ENCODE measurements at regions of chr3 and their contacts with region 1.

Region 1: GRCh38 chr3:28348629-28349483 is at the starts of genes AZI2 and ZCWPW2:
- H3K4me3 Mint-ChIP-seq: peak within 1 kb of the TSS; percentile 95
- H3K27ac Mint-ChIP-seq: peak within 1 kb of the TSS; percentile 100
- H3K4me1 Mint-ChIP-seq: peaks cover 37% of the 10 kb centered on the region
- H3K27me3 Mint-ChIP-seq: no peaks in the 10 kb centered on the region

Region 2: GRCh38 chr3:28241221-28242160 is 107.4 kb before region 1 on chr3 and contains the start of gene CMC1:
- intact Hi-C with region 1: loop called (anchors 2 kb)
- H3K4me3 Mint-ChIP-seq: peak within 1 kb of the TSS; percentile 85
- H3K27ac Mint-ChIP-seq: peak within 1 kb of the TSS; percentile 92
- H3K4me1 Mint-ChIP-seq: peaks cover 44% of the 10 kb centered on the region
- H3K27me3 Mint-ChIP-seq: peaks cover under 1% of the 10 kb centered on the region

Region 3: DNA sequence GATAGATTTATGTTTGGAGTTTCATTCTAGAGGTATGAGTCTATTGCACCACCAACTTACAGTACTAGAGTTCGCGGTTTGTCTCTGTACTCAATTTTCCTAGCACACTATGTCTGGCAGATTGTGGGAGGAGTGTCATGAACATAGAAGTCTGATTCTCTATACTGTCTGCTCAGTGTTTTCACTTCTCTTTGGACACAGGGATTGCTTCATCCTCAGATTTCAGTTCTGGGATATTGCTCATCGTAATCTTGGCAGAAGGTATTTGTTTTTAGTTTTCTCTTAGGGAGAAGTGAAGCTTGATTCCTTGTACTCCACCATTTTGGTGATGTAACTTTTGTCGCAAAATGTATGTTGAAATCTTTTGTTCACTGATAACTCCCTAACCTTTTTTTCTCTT is 27.6 kb after region 1 on chr3:
- intact Hi-C with region 1: loop called (anchors 1 kb)
- H3K4me3 Mint-ChIP-seq: peak overlapping the region; percentile 13
- H3K27ac Mint-ChIP-seq: peak overlapping the region; percentile 37
- H3K4me1 Mint-ChIP-seq: peaks cover 38% of the 10 kb centered on the region
- H3K27me3 Mint-ChIP-seq: peaks cover 3% of the 10 kb centered on the region